Prostate gland (tissue), 2 donors: ENCODE measurements at regions of chr15 and their contacts with region 1.

Region 1: GRCh38 chr15:31824024-31824423 is 206.3 kb upstream of the CHRNA7 start:
- DNase-seq: no peak
- H3K4me3 ChIP-seq: no peak overlapping the region
- H3K27ac ChIP-seq: no peak overlapping the region
- H3K4me1 ChIP-seq: no peaks in the 10 kb centered on the region
- H3K27me3 ChIP-seq: no peaks in the 10 kb centered on the region
- CTCF ChIP-seq: no peak
- POLR2A ChIP-seq: no peak

Region 2: DNA sequence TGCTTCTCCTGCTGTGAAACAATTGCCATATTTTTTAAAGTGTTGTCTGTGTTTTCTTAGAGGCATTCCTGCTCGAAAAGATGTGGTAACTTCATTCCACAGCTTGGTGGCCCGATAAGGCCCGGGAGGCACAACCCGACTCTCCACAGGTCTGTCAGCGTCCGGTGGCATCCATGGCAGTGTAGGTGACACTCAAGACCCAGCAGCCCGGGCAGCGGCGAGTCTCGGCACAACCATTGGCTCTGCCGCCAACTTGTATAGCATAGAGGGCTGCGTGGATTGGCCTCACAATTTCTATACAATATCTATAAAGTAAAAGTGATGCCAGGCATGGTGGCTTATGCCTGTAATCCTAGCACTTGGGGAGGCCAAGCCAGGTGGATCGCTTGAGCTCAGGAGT is 56.0 kb before region 1 on chr15:
- intact Hi-C with region 1: loop called (anchors 10 kb)
- DNase-seq: no peak
- H3K4me3 ChIP-seq: no peak overlapping the region
- H3K27ac ChIP-seq: no peak overlapping the region
- H3K4me1 ChIP-seq: no peaks in the 10 kb centered on the region
- H3K27me3 ChIP-seq: no peaks in the 10 kb centered on the region
- CTCF ChIP-seq: no peak
- POLR2A ChIP-seq: no peak

Region 3: GRCh38 chr15:31887246-31887645 is 63.2 kb after region 1 on chr15:
- intact Hi-C with region 1: loop called (anchors 10 kb)
- DNase-seq: no peak
- H3K4me3 ChIP-seq: no peak overlapping the region
- H3K27ac ChIP-seq: no peak overlapping the region
- H3K4me1 ChIP-seq: no peaks in the 10 kb centered on the region
- H3K27me3 ChIP-seq: peaks cover 2% of the 10 kb centered on the region
- CTCF ChIP-seq: no peak
- POLR2A ChIP-seq: no peak